ENCODE measurements at regions of chr13 and their contacts with region 1.

Region 1: GRCh38 chr13:59931612-59932011 is 232.1 kb downstream of the DIAPH3 start:
- DNase-seq: no peak
- ATAC-seq: no peak
- H3K4me3 Mint-ChIP-seq: no peak overlapping the region
- H3K27ac Mint-ChIP-seq: no peak overlapping the region
- H3K4me1 Mint-ChIP-seq: no peaks in the 10 kb centered on the region
- H3K27me3 Mint-ChIP-seq: no peaks in the 10 kb centered on the region

Region 2: GRCh38 chr13:59957438-59957837 is 25.8 kb after region 1 on chr13:
- CTCF ChIA-PET with region 1: no interaction called
- POLR2A ChIA-PET with region 1: no interaction called
- intact Hi-C with region 1: loop called in 1 of 2 experiments (anchors 2 kb)
- DNase-seq: no peak
- ATAC-seq: no peak
- H3K4me3 Mint-ChIP-seq: no peak overlapping the region
- H3K27ac Mint-ChIP-seq: no peak overlapping the region
- H3K4me1 Mint-ChIP-seq: no peaks in the 10 kb centered on the region
- H3K27me3 Mint-ChIP-seq: no peaks in the 10 kb centered on the region